ENCODE measurements at regions of chr15 and their contacts with region 1.

Region 1: DNA sequence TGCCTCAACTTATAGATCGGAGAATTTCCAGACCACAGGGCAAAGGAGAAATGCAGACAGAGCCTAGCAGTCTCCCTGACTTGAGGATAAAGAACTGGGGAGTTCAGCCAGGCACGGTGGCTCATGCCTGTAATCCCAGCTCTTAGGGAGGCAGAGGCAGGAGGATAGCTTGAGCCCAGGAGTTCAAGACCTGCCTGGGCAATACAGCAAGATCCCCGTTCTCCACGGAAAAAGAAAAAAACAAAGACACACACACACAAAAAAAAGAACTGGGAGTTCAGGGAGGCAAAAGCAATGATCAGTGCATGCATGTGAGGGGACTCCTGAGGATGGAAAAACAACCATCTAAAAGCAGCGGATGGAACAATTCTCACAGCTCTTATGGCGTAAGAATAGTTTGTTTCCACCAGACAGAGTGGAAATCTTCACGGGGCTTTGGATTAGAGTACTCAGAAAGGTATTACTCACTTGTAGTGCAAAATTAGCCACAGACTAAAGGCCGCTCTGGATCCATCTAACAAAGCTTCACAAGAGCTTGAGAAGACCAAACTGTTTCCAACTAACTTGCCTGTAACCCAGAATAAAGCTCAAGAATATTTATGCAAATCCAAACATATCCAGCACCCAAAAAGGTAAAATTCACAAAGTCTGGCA is 16.3 kb downstream of the SEC11A start:
- DNase-seq: no peak
- H3K4me3 Mint-ChIP-seq: no peak overlapping the region
- H3K27ac Mint-ChIP-seq: peak overlapping the region; percentile 52
- H3K4me1 Mint-ChIP-seq: peaks cover 37% of the 10 kb centered on the region
- H3K27me3 Mint-ChIP-seq: no peaks in the 10 kb centered on the region
- CTCF ChIP-seq: no peak

Region 2: GRCh38 chr15:84552896-84553295 is 146.8 kb before region 1 on chr15:
- CTCF ChIA-PET with region 1: no interaction called
- intact Hi-C with region 1: no loop called
- DNase-seq: no peak
- H3K4me3 Mint-ChIP-seq: no peak overlapping the region
- H3K27ac Mint-ChIP-seq: no peak overlapping the region
- H3K4me1 Mint-ChIP-seq: peaks cover 7% of the 10 kb centered on the region
- H3K27me3 Mint-ChIP-seq: no peaks in the 10 kb centered on the region
- CTCF ChIP-seq: no peak

Region 3: DNA sequence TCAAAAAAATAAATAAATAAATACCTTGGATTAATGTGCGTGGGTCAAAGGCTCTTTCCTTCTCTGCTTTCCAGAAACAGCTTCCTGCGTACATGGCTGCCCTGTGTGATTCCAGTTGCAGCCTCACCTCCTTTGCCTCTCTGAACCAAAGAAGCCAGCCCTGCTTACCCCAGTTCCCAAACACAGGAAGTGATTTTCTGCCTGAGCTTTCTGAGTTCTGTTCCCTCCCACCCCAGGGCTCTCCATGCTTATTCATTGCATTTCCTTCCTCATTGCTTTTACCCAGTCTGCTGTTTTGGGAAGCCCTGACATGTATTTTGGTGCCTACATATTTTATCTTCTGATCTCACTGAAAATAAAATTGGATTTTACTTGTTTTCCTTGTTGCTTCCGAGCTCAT is 83.4 kb before region 1 on chr15:
- CTCF ChIA-PET with region 1: no interaction called
- intact Hi-C with region 1: no loop called
- DNase-seq: no peak
- H3K4me3 Mint-ChIP-seq: no peak overlapping the region
- H3K27ac Mint-ChIP-seq: no peak overlapping the region
- H3K4me1 Mint-ChIP-seq: no peaks in the 10 kb centered on the region
- H3K27me3 Mint-ChIP-seq: no peaks in the 10 kb centered on the region
- CTCF ChIP-seq: no peak

Region 4: DNA sequence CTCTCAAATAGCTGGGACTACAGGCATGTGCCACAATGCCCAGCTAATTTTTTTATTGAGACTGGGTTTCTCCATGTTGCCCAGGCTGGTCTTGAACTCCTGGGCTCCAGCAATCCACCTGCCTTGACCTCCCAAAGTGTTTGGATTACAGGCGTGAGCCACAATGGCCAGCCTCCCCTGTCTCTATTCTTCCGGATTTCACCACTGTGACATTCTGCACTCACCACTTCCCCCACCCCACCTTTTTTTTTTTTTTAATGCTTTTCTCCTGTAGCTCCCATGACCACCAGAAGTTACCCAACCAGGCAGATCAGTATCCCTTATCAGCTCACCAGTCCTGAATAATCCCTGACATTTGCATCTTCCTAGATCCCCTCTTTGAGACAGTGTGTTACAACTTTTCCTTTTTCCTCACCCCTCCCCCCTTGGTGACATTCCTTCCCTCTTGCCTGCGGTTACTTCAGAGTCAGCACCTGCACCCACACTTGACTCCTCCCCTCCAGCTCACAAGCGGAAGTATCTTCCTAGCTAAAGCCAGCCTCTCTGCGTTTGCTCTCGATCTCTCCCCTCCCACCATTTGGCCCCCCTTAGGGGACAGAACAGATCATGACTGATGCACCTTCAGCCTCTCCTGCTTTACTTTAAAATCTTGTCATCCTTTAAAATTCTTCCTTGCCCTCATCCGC is 35.3 kb after region 1 on chr15:
- CTCF ChIA-PET with region 1: interaction called, 4 read pairs
- intact Hi-C with region 1: loop called (anchors 2 kb)
- DNase-seq: peak; percentile 94
- H3K4me3 Mint-ChIP-seq: peak overlapping the region; percentile 45
- H3K27ac Mint-ChIP-seq: peak overlapping the region; percentile 96
- H3K4me1 Mint-ChIP-seq: peaks cover 39% of the 10 kb centered on the region
- H3K27me3 Mint-ChIP-seq: no peaks in the 10 kb centered on the region
- CTCF ChIP-seq: no peak

Region 5: DNA sequence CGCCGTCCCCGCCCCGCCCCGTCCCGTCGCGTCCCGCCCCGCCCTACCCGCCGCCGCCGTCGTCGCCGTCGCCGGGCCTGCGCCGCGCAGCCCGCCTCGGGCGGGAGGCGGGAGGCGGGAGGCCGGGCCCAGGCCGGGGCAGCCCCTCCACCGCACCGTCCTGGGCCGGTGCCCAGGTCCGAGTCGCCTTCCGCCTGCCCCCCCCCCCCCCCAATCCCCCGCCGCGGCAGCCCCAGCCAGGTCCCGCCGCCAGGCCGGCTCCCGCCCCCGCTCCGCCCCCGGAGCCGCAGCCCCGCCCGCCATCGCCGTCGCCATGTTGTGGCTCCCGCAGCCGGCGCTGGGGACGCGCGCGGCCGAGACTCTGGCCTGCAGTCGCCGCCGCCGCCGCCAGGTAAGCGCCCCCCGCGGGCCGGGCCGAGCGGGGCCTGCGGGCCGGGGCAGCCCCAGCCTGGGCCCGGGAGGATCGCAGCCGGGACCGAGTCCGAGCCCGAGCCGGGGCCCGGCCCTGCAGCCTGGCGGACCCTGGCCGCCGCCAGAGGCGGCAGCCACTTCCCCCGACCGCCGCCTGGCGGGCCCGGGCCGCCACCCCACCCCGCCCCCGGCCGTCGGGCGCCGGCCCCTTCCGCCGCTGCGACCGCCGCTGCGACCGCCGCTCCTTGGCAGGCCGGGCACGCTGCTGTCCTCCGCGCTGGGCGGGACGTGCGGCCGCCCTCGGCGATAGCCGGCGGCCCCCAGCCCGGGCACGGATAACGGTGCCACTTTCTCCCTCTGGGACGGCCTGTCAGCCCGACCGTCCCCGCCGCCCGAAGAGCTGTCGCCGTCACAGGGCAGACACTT is 48.8 kb after region 1 on chr15 and contains the start of gene ZNF592:
- CTCF ChIA-PET with region 1: no interaction called
- intact Hi-C with region 1: loop called (anchors 5 kb)
- DNase-seq: peak; percentile 93
- H3K4me3 Mint-ChIP-seq: peak within 1 kb of the TSS; percentile 94
- H3K27ac Mint-ChIP-seq: peak within 1 kb of the TSS; percentile 84
- H3K4me1 Mint-ChIP-seq: peaks cover 48% of the 10 kb centered on the region
- H3K27me3 Mint-ChIP-seq: no peaks in the 10 kb centered on the region
- CTCF ChIP-seq: peak; percentile 26
- total RNA-seq, gene ZNF592: 49.5 and 49.6 TPM in 2 replicates

Region 6: DNA sequence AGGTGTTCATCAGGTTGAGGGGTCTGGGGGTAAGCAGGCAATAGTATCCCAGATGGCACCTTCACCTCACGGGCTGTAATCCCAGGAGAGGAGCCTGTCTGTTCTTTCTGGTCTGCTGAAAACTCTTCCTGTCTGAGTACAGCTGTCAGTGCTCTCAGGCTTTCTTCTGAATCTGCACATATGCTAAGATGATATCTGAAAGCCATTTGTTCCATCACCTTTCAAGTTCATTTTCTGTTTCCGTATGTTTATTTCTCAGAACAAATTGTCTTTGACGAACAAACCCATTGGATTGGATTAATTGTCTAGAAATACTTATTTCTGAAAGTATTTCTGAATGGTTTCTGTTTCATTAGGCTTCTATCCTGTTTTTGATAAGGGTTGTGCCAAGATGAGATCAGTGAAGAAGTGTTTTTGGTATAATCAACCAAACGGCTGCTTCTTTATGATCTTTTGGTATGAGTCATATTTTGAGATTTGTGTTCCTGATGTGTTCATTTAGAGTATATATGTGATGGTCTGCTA is 62.0 kb after region 1 on chr15:
- CTCF ChIA-PET with region 1: no interaction called
- intact Hi-C with region 1: no loop called
- DNase-seq: no peak
- H3K4me3 Mint-ChIP-seq: no peak overlapping the region
- H3K27ac Mint-ChIP-seq: no peak overlapping the region
- H3K4me1 Mint-ChIP-seq: peaks cover 14% of the 10 kb centered on the region
- H3K27me3 Mint-ChIP-seq: no peaks in the 10 kb centered on the region
- CTCF ChIP-seq: no peak

Measured in Calu3 (cell line).